Right ventricle myocardium inferior (tissue), 1 donor: ENCODE measurements at regions of chr13 and their contacts with region 1.

Region 1: DNA sequence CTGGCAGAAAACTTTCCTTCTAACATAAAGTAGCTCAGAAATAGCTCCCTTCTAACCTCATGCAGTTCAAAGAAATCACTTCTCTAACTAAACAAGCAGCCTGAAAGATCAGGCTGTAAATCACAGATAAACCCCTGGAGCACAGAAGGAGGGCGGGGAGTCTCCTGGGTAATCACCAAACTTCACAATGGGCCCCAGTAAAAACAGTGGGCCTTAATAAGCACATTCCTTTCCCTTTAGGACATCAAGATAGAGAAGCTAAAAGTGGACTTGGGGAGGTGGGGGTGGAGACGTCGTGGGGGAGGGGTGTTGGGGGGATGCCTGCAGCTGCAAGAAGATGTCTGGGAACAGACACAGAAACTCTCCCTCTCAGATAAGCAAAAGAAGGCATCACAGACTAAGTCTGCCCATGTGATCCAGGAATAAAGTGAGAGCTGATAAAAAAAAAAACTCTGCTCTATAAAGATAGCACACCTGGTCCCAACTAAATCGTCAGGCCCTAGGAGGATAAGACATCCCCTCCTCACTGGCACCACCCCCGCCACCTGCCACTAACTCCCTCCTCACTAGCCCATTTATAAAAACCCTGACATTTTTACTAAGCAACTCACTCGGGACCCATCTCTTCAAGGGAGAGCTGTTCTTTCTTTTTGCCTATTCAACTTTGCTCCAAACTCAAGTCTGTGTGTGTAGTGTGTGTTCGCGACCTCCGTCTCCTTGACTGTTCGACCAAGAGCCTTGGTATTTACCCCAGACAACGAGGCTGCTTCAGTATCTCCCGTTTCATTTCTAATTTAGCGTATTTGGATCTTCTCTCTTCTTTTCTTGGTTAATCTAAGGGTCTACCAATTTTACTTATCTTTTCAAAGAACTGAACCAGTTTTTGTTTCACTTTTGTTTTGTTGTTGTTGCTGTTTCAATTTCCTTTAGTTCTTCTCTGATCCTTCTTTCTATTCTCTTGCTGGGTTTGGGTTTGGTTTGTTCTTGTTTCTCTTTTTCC is 31.7 kb downstream of the DNAJC15 start:
- DNase-seq: no peak
- ATAC-seq: peak; percentile 61

Region 2: GRCh38 chr13:43036351-43037250 is 18.5 kb before region 1 on chr13:
- intact Hi-C with region 1: loop called (anchors 2 kb)
- DNase-seq: peak; percentile 72
- ATAC-seq: peak; percentile 94

Region 3: GRCh38 chr13:43245374-43245964 is 190.4 kb after region 1 on chr13:
- intact Hi-C with region 1: no loop called
- DNase-seq: no peak
- ATAC-seq: no peak